Endothelial cell of umbilical vein (primary cell): ENCODE measurements at regions of chr13 and their contacts with region 1.

Region 1: GRCh38 chr13:40445557-40445990 is 220.9 kb downstream of the FOXO1 start:
- DNase-seq: peak; percentile 99
- H3K4me3 ChIP-seq: no peak overlapping the region
- H3K27ac ChIP-seq: peak overlapping the region; percentile 99
- H3K4me1 ChIP-seq: peaks cover 36% of the 10 kb centered on the region
- H3K27me3 ChIP-seq: no peaks in the 10 kb centered on the region
- CTCF ChIP-seq: no peak
- POLR2A ChIP-seq: peak; percentile 42

Region 2: GRCh38 chr13:39881887-39882286 is 563.7 kb before region 1 on chr13:
- CTCF ChIA-PET with region 1: no interaction called
- POLR2A ChIA-PET with region 1: no interaction called
- dilution Hi-C with region 1: no loop called
- intact Hi-C with region 1: loop called (anchors 2 kb)
- DNase-seq: peak; percentile 88
- H3K4me3 ChIP-seq: no peak overlapping the region
- H3K27ac ChIP-seq: peak overlapping the region; percentile 90
- H3K4me1 ChIP-seq: peaks cover 53% of the 10 kb centered on the region
- H3K27me3 ChIP-seq: no peaks in the 10 kb centered on the region
- CTCF ChIP-seq: no peak
- POLR2A ChIP-seq: no peak

Region 3: DNA sequence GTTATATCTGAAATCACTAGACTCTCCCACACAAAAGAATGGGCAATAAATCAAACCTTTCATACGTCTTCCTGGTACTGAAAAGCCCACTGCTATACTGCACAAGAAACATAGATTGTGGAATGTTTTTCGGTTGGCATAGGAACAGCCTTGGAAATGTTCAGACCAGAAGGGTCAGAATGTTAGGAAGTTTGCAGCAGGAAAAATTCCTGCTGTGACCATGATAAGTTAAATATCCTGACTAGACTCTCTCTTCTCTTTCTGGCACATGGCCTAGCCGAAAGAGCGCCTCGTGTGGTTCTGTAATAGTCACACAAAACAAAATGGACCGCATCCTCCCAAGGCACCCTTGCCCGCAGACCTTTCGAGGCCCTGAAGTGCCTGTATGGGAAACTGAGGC is 362.9 kb before region 1 on chr13:
- CTCF ChIA-PET with region 1: no interaction called
- POLR2A ChIA-PET with region 1: no interaction called
- dilution Hi-C with region 1: no loop called
- intact Hi-C with region 1: loop called (anchors 1 kb)
- DNase-seq: peak; percentile 99
- H3K4me3 ChIP-seq: no peak overlapping the region
- H3K27ac ChIP-seq: peak overlapping the region; percentile 71
- H3K4me1 ChIP-seq: peaks cover 11% of the 10 kb centered on the region
- H3K27me3 ChIP-seq: no peaks in the 10 kb centered on the region
- CTCF ChIP-seq: peak; percentile 30 to 62
- POLR2A ChIP-seq: no peak

Region 4: DNA sequence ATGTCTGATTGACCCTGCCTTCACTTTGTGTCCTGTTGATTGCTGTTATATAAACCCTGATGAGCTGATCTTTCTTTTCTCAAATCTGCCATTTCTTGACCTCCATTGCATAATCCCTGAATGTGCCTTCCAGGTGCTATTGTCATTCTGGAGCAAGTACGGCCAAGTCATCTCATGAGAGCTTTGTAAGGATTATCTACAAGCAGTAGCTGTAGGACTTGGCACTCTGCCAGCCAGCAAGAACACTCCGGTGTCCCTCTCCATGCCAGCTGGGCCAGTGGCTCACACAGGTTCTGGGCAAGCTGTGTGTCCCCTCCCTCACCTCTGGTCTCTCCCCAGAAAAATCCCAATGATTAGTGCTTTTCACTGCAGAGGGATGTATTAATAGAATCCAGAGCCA is 127.2 kb before region 1 on chr13:
- CTCF ChIA-PET with region 1: no interaction called
- POLR2A ChIA-PET with region 1: no interaction called
- dilution Hi-C with region 1: no loop called
- intact Hi-C with region 1: loop called (anchors 1 kb)
- DNase-seq: peak; percentile 55
- H3K4me3 ChIP-seq: no peak overlapping the region
- H3K27ac ChIP-seq: no peak overlapping the region
- H3K4me1 ChIP-seq: peaks cover 16% of the 10 kb centered on the region
- H3K27me3 ChIP-seq: no peaks in the 10 kb centered on the region
- CTCF ChIP-seq: no peak
- POLR2A ChIP-seq: no peak

Region 5: GRCh38 chr13:40433577-40433976 is 12.0 kb before region 1 on chr13:
- CTCF ChIA-PET with region 1: no interaction called
- POLR2A ChIA-PET with region 1: no interaction called
- dilution Hi-C with region 1: no loop called
- intact Hi-C with region 1: no loop called
- DNase-seq: no peak
- H3K4me3 ChIP-seq: no peak overlapping the region
- H3K27ac ChIP-seq: no peak overlapping the region
- H3K4me1 ChIP-seq: peaks cover 8% of the 10 kb centered on the region
- H3K27me3 ChIP-seq: no peaks in the 10 kb centered on the region
- CTCF ChIP-seq: no peak
- POLR2A ChIP-seq: no peak

Region 6: GRCh38 chr13:40503966-40504591 is 58.5 kb after region 1 on chr13:
- CTCF ChIA-PET with region 1: interaction called, 6 read pairs
- POLR2A ChIA-PET with region 1: no interaction called
- dilution Hi-C with region 1: no loop called
- intact Hi-C with region 1: loop called (anchors 1 kb)
- DNase-seq: peak; percentile 99
- H3K4me3 ChIP-seq: no peak overlapping the region
- H3K27ac ChIP-seq: peak overlapping the region; percentile 99
- H3K4me1 ChIP-seq: peaks cover 51% of the 10 kb centered on the region
- H3K27me3 ChIP-seq: no peaks in the 10 kb centered on the region
- CTCF ChIP-seq: no peak
- POLR2A ChIP-seq: peak; percentile 74

Region 7: GRCh38 chr13:40589285-40590109 is 143.9 kb after region 1 on chr13:
- CTCF ChIA-PET with region 1: interaction called, 4 read pairs
- POLR2A ChIA-PET with region 1: no interaction called
- dilution Hi-C with region 1: no loop called
- intact Hi-C with region 1: loop called (anchors 1 kb)
- DNase-seq: peak; percentile 94
- H3K4me3 ChIP-seq: peak overlapping the region in 1 of 3 experiments; percentile 14
- H3K27ac ChIP-seq: peak overlapping the region; percentile 87
- H3K4me1 ChIP-seq: peaks cover 69% of the 10 kb centered on the region
- H3K27me3 ChIP-seq: no peaks in the 10 kb centered on the region
- CTCF ChIP-seq: no peak
- POLR2A ChIP-seq: peak; percentile 57